Heart right ventricle (tissue), 16 donors: ENCODE measurements at regions of chr13 and their contacts with region 1.

Region 1: DNA sequence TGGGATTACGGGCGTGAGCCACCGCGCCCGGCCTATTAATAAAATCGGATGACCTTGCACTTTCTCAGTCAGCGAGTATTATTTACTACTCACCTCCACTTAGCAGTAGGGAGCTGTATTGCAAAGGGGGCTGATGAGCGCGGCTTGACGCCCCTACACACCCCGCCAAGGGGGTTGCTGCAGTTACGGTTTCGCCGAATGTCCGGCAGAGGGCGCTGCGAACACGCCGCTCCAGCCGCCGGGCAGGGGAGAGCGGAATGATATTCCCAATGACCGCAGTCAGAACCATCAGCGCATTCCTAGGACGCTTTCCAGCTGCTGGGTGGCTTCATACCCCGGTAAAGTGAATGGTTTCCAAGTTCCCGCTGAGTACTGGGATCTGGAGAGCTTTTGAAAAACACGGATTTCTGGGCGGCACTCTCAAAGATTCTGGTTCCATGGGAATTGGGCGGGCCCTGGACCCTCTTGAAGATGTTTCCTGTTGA is 30.0 kb upstream of the TPT1 start:
- DNase-seq: peak; percentile 73 to 77
- ATAC-seq: peak; percentile 81 to 91 (median 87)
- H3K4me3 ChIP-seq: peak overlapping the region in 6 of 10 donors; percentile 9 to 37 (median 29)
- H3K27ac ChIP-seq: peak overlapping the region in 3 of 10 donors; percentile 10 to 66 (median 12)
- H3K4me1 ChIP-seq: peaks cover 5 to 44% (median 26%) of the 10 kb centered on the region in 9 donors
- H3K27me3 ChIP-seq: no peaks in the 10 kb centered on the region
- CTCF ChIP-seq: peak; percentile 88 to 99 (median 96)

Region 2: GRCh38 chr13:44403461-44404056 is 967.4 kb before region 1 on chr13:
- intact Hi-C with region 1: no loop called
- DNase-seq: no peak
- ATAC-seq: peak in 1 of 8 donors; percentile 12
- H3K4me3 ChIP-seq: no peak overlapping the region
- H3K27ac ChIP-seq: no peak overlapping the region
- H3K4me1 ChIP-seq: peaks cover 0 to 8% (median 0%) of the 10 kb centered on the region in 9 donors
- H3K27me3 ChIP-seq: no peaks in the 10 kb centered on the region
- CTCF ChIP-seq: no peak

Region 3: GRCh38 chr13:45242070-45242469 is 128.9 kb before region 1 on chr13:
- intact Hi-C with region 1: no loop called
- DNase-seq: no peak
- ATAC-seq: peak in 7 of 8 donors; percentile 47 to 76 (median 67)
- H3K4me3 ChIP-seq: no peak overlapping the region
- H3K27ac ChIP-seq: peak overlapping the region in 1 of 10 donors; percentile 21
- H3K4me1 ChIP-seq: peaks cover 0 to 22% (median 14%) of the 10 kb centered on the region in 9 donors
- H3K27me3 ChIP-seq: no peaks in the 10 kb centered on the region
- CTCF ChIP-seq: no peak

Region 4: DNA sequence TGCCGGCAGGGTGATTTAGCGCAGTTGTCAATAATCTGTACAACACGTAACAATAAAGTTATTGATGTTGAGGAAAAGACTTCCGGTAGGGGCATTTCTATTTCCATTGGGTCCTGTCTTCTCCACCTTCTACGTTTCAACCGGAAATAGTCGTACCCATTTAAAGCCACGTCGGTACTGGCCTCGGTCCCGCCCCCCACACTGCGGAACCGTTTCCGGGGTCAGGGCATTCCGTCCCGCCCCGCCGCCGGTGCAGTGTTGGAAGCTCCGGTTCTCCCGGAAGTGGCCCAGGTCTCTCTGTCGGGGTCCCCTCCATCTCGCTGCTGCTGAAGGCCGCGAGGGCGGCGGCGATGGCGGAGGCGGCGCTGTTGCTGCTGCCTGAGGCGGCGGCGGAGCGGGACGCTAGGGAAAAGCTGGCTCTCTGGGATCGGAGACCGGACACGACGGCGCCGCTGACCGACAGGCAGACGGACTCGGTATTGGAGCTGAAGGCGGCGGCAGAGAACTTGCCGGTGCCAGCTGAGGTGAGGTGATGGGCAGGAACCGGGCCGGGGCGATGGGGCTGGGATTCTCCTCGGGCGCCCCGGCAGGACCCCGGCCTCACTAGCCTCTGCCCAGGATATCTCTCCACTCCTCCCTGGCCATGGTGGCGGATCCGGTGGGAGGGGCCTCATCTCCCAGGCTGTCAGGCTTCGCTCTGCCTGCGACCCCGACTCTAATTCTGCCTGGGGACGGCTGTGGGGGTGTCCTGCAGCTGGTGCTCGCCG is 93.9 kb after region 1 on chr13 and contains the start of gene COG3:
- intact Hi-C with region 1: loop called in 4 of 10 experiments (anchors 2 to 10 kb)
- DNase-seq: peak; percentile 94 to 95
- ATAC-seq: peak; percentile 98 to 100 (median 99)
- H3K4me3 ChIP-seq: peak within 1 kb of the TSS; percentile 75 to 97 (median 85)
- H3K27ac ChIP-seq: peak within 1 kb of the TSS; percentile 70 to 97 (median 94)
- H3K4me1 ChIP-seq: peaks cover 6 to 52% (median 41%) of the 10 kb centered on the region in 9 donors
- H3K27me3 ChIP-seq: no peaks in the 10 kb centered on the region
- CTCF ChIP-seq: peak in 5 of 9 donors; percentile 17 to 62 (median 26)
- total RNA-seq, gene COG3: 12.3 to 18.0 (median 15.8) TPM

Region 5: DNA sequence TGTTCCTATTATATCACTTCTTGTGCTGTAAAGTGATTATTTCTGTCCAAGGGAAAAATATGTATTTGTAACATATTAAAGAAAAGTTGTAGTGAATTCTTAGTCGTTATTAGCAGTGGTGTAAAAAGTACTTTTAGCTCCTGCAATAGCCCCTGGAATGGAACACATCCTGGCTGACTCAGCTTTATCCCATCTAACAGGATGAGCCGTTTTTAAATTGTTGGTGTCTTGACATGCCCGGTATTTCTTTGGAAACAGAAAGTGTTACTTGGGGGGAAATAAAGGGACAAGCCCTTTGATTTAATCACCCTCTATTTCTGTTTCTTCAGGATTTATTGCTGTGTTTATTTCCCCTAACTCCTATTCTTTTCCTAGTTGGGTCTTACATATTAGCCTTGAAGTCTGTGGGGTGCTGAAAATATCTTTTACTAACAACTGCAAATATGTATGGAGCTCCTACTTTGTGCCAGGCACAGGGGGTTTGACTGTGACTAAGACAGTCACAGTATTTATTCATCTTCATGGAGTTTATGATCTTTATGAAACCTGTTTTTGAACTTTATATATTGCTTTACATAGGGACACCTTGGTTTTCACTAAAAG is 111.7 kb after region 1 on chr13:
- intact Hi-C with region 1: loop called in 3 of 10 experiments (anchors 5 to 10 kb)
- DNase-seq: no peak
- ATAC-seq: peak in 2 of 8 donors; percentile 65 to 76
- H3K4me3 ChIP-seq: no peak overlapping the region
- H3K27ac ChIP-seq: peak overlapping the region in 5 of 10 donors; percentile 2 to 61 (median 10)
- H3K4me1 ChIP-seq: peaks cover 0 to 18% (median 13%) of the 10 kb centered on the region in 9 donors
- H3K27me3 ChIP-seq: no peaks in the 10 kb centered on the region
- CTCF ChIP-seq: no peak

Region 6: GRCh38 chr13:45490068-45490467 is 119.1 kb after region 1 on chr13:
- intact Hi-C with region 1: loop called in 4 of 10 experiments (anchors 5 to 10 kb)
- DNase-seq: no peak
- ATAC-seq: peak in 2 of 8 donors; percentile 42 to 52
- H3K4me3 ChIP-seq: no peak overlapping the region
- H3K27ac ChIP-seq: no peak overlapping the region
- H3K4me1 ChIP-seq: no peaks in the 10 kb centered on the region
- H3K27me3 ChIP-seq: no peaks in the 10 kb centered on the region
- CTCF ChIP-seq: peak in 5 of 9 donors; percentile 15 to 46 (median 42)

Region 7: DNA sequence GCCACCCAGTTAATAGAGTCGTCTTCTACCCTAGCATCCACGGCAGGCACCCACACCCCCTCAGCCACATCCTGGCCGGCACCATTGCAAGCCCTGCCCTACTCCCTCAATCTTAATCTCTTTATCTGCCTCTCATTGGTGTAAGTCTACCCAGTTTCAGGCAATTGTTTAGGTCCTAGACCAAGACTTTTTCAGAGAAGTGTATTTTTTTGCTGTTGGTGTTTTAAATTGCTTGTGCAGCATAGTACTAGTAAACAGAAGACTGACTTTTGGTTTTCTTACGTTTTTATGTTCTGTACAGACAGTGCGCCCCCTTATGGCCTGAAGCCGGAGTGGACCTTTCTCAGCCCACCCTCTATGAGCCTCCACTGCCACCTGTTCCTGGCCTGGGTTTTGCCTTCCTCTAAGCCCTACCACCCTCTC is 813.3 kb after region 1 on chr13:
- intact Hi-C with region 1: no loop called
- DNase-seq: peak; percentile 20 to 23
- ATAC-seq: peak in 5 of 8 donors; percentile 46 to 61 (median 50)
- H3K4me3 ChIP-seq: peak overlapping the region in 1 of 10 donors; percentile 61
- H3K27ac ChIP-seq: peak overlapping the region in 1 of 10 donors; percentile 88
- H3K4me1 ChIP-seq: peaks cover 0 to 28% (median 0%) of the 10 kb centered on the region in 9 donors
- H3K27me3 ChIP-seq: peaks cover 0 to 11% (median 0%) of the 10 kb centered on the region in 7 donors
- CTCF ChIP-seq: peak in 5 of 9 donors; percentile 20 to 65 (median 24)